ENCODE measurements at regions of chrX and their contacts with region 1.

Region 1: GRCh38 chrX:31658360-31658759 is 586.5 kb upstream of the FTHL17 start:
- DNase-seq: peak in 1 of 2 experiments; percentile 71
- H3K4me3 ChIP-seq: no peak overlapping the region
- H3K4me1 ChIP-seq: no peaks in the 10 kb centered on the region
- H3K27me3 ChIP-seq: peaks cover 10% of the 10 kb centered on the region

Region 2: DNA sequence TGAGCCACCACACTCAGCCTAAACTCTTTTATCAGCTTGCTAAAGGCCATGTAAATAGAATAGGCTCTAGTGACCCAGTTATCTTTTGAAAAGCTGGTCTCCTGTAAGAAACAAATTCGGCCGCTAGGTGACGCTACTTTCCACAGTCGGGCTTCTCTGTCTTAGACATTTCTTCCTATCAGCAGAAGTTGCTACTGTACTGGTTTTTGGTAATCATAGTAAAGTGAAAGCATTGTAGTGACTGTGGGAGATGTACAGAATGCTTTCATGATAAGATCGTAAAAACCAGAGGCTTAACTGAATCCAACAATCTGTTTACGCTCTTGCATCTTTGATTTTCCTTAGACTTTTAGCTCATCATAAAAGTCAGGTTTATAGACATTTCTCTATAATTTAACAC is 922.5 kb before region 1 on chrX:
- in situ Hi-C with region 1: loop called (anchors 25 kb)
- DNase-seq: peak; percentile 79 to 89
- H3K4me3 ChIP-seq: no peak overlapping the region
- H3K4me1 ChIP-seq: no peaks in the 10 kb centered on the region
- H3K27me3 ChIP-seq: no peaks in the 10 kb centered on the region

Region 3: DNA sequence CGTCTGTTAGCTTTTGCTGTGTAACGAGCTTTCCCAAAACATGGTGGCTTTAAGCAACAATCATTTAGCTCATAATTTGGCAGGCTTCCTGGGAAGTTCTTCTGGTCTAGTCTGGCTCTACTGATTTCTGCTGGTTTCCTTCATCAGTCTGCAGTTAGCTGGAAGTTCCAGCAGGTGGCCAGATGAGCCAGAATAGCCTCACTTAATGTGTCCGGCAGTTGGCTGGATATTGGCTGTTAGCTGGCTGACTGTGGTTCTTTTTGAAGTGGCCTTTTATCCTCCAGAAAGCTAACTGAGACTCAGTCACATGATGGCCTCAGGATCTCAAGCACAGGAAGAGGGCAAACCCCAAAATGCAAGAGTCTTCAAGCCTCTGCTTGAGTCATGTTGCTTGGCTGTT is 621.5 kb before region 1 on chrX:
- in situ Hi-C with region 1: loop called (anchors 10 kb)
- DNase-seq: peak; percentile 58 to 70
- H3K4me3 ChIP-seq: no peak overlapping the region
- H3K4me1 ChIP-seq: no peaks in the 10 kb centered on the region; the same call in 1 of the 2 replicates
- H3K27me3 ChIP-seq: peaks cover 9% of the 10 kb centered on the region

Measured in HAP-1 (cell line).